ENCODE measurements at regions of chr19 and their contacts with region 1.

Region 1: GRCh38 chr19:45692187-45693105 is at the start of gene QPCTL:
- DNase-seq: peak; percentile 98
- H3K4me3 Mint-ChIP-seq: peak within 1 kb of the TSS; percentile 94
- H3K27ac Mint-ChIP-seq: peak within 1 kb of the TSS; percentile 99
- H3K4me1 Mint-ChIP-seq: peaks cover 14% of the 10 kb centered on the region
- H3K27me3 Mint-ChIP-seq: no peaks in the 10 kb centered on the region
- total RNA-seq, gene QPCTL: 24.2 and 26.7 TPM in 2 replicates

Region 2: DNA sequence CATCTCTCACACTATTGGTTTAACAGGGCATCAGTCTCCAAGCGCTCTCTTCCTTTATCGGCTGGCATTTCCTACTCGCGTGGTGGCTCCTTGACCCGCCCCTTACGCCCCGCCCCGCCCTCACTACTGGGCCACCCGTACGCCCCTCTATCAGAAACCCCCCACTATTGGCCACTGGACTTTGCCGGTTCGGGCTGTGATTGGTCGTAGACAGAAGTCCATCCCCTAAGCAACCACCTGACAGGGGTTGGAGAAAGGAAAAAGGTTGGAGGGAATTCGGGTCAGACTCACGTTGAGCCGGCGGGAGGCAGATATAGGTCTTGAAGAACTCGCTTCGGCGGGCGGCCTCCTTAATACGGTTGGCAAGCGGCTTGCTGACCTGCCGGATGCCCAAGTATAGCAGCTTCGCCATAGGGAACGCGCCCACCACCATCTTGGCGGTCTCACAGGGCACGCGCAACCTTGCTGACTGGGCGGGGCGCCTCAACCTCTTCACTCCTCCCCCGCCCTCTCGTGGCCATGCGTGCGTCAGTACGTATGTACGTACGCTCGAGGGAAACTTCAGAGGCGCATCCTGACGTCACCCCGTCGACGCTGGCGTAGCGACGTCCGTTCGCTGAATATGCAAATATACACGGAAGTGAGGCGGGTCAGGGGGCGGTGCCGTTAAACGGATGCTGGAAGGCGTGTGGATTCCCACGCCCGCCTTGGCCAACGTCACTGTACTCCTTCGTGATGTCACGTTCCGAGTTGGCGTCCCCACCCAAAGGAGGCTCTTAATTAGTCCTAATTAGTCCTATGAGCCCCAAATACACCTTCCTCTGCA is 107.9 kb before region 1 on chr19 and contains the start of gene OPA3:
- intact Hi-C with region 1: loop called (anchors 5 kb)
- DNase-seq: peak; percentile 98
- H3K4me3 Mint-ChIP-seq: peak within 1 kb of the TSS; percentile 89
- H3K27ac Mint-ChIP-seq: peak within 1 kb of the TSS; percentile 97
- H3K4me1 Mint-ChIP-seq: peaks cover 9% of the 10 kb centered on the region
- H3K27me3 Mint-ChIP-seq: peaks cover under 1% of the 10 kb centered on the region
- total RNA-seq, gene OPA3: 15.2 and 15.9 TPM in 2 replicates

Region 3: DNA sequence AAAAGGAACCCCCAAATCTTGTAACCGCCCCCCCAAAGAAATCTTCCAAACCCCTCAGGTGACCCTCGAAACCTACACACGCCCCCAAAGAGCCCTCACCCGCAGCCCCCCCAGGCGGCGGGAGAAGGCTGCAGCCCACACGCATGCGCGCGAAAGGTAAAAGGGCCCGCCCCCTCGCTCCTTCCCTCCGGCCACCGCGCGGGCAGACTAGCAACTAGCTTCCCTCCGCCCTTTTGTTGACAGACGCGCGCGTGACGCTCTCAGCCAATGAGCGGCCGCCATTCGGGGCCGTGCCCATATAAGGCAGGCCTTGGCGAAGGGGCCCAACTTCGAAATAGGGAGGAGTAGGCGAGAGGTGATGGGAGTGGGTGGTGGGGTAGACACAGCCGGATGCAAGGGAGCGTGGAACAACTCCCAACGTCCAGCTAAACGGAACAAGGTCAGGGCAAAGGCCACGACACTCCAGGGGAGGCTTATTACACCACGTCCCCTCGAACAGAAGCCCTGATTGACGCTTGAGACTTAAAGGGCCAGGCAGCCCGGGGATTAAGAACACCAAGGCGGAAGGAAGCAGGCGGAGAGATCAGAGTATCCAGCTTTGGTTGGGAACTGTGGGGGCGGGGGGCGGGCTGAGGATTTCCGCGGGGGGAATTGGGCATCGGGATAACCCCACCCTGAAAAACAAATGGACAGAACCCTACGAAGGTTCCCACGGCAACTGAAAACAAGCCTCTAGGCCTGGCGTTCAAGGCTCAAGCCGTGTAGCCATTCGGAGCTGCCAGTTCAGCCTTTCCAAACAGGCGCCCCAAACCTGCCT is 24.9 kb after region 1 on chr19:
- intact Hi-C with region 1: loop called (anchors 1 kb)
- DNase-seq: peak; percentile 99
- H3K4me3 Mint-ChIP-seq: peak overlapping the region; percentile 94
- H3K27ac Mint-ChIP-seq: peak overlapping the region; percentile 94
- H3K4me1 Mint-ChIP-seq: peaks cover 27% of the 10 kb centered on the region
- H3K27me3 Mint-ChIP-seq: no peaks in the 10 kb centered on the region

Region 4: GRCh38 chr19:45770192-45771101 is 78.0 kb after region 1 on chr19:
- intact Hi-C with region 1: loop called (anchors 2 kb)
- DNase-seq: peak; percentile 86
- H3K4me3 Mint-ChIP-seq: peak overlapping the region; percentile 86
- H3K27ac Mint-ChIP-seq: no peak overlapping the region
- H3K4me1 Mint-ChIP-seq: peaks cover 8% of the 10 kb centered on the region
- H3K27me3 Mint-ChIP-seq: peaks cover 12% of the 10 kb centered on the region